AG04449 (cell line): ENCODE measurements at regions of chr11 and their contacts with region 1.

Region 1: GRCh38 chr11:64185816-64186498 is at the start of gene STIP1:
- DNase-seq: peak; percentile 100
- H3K4me3 ChIP-seq: peak within 1 kb of the TSS; percentile 71
- CTCF ChIP-seq: peak; percentile 69

Region 2: DNA sequence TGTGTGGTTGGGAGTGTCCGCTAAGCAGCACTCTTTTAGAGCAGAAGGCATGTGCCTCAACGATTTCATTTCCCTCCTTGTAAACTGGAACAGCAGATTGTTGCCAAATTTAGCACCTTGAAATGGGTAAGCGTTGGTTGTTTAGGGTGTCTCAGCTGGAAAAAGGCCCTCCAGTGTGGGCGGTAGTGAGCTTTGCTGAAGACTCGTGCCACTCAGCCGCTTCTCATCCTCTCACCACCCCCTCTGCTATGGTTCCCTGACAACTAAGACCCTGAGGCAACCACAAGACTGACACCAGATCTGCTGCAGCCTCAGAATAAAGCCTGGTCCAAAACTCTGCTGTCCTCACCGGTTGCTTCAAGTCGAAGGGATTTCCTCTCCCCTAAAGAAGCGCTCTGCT is 10.7 kb after region 1 on chr11:
- CTCF ChIA-PET with region 1: interaction called, 30 read pairs
- POLR2A ChIA-PET with region 1: interaction called, 6 read pairs
- DNase-seq: no peak
- H3K4me3 ChIP-seq: no peak overlapping the region
- CTCF ChIP-seq: no peak